ENCODE measurements at regions of chr3 and their contacts with region 1.

Region 1: DNA sequence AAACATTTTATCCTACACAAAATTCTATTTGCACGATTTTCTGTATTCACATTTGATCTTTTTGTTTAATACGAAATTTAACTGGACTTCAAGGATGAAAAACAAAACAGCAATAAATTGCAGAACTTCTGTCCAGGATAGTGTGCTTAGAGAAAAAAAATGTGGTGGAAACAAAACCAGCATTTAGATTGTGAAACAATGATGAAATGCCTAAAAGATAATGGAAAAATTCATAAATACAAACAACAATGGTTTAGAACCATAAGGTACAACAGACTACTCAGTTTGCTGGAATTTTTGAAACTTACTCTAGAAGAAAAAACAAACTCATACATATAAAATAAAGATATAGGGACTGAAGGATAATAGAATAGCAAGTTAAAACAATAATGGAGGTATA is 234.0 kb downstream of the BCHE start:
- DNase-seq: no peak
- ATAC-seq: no peak
- H3K4me3 ChIP-seq: no peak overlapping the region
- H3K27ac ChIP-seq: no peak overlapping the region
- H3K4me1 ChIP-seq: no peaks in the 10 kb centered on the region
- H3K27me3 ChIP-seq: no peaks in the 10 kb centered on the region
- CTCF ChIP-seq: no peak

Region 2: DNA sequence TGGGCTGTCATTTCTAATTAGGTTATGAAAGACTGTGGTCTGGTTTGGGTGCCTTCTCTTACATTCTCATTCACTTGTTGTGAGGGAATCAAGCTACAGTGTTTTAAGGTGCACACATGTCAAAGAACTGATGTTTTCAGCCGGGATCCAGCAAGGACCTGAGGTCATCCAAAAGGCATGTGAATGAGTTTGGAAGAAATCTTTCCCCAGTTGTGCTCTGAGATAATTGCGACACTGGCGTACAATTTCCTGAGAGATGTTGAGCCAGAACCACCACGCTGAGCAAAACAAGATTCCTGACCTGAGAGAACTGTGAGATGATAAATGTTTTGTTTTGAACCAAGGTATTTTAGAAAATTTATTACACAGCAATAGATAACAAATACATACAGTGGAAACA is 111.7 kb before region 1 on chr3:
- CTCF ChIA-PET with region 1: no interaction called
- POLR2A ChIA-PET with region 1: no interaction called
- in situ Hi-C with region 1: no loop called
- intact Hi-C with region 1: no loop called
- DNase-seq: no peak
- ATAC-seq: no peak
- H3K4me3 ChIP-seq: no peak overlapping the region
- H3K27ac ChIP-seq: no peak overlapping the region
- H3K4me1 ChIP-seq: no peaks in the 10 kb centered on the region
- H3K27me3 ChIP-seq: no peaks in the 10 kb centered on the region
- CTCF ChIP-seq: no peak

Region 3: DNA sequence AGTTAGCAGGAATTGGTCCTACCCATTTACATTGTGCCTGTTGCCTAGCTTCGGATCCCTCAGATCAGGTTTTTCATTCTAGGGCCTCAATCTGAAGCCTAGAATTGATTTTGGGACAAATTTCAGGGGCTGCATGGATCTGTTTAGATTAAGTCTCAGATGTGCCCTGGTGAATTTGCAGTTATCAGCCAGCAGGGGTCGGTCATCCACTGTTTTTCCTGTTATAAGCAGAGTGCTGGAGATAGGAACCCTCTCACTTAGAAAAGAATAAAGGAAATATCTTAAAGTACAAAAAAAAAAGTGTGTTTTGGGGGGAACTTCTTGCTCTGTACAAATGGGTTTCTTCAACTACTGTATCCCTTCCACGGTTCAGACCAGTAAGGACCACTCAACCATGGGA is 21.6 kb after region 1 on chr3:
- CTCF ChIA-PET with region 1: no interaction called
- POLR2A ChIA-PET with region 1: no interaction called
- in situ Hi-C with region 1: no loop called
- intact Hi-C with region 1: loop called (anchors 1 kb)
- DNase-seq: no peak
- ATAC-seq: no peak
- H3K4me3 ChIP-seq: no peak overlapping the region
- H3K27ac ChIP-seq: no peak overlapping the region
- H3K4me1 ChIP-seq: no peaks in the 10 kb centered on the region
- H3K27me3 ChIP-seq: no peaks in the 10 kb centered on the region
- CTCF ChIP-seq: peak; percentile 32

Measured in Panc1 (cell line).